Caki2 (cell line): ENCODE measurements at regions of chr1 and their contacts with region 1.

Region 1: DNA sequence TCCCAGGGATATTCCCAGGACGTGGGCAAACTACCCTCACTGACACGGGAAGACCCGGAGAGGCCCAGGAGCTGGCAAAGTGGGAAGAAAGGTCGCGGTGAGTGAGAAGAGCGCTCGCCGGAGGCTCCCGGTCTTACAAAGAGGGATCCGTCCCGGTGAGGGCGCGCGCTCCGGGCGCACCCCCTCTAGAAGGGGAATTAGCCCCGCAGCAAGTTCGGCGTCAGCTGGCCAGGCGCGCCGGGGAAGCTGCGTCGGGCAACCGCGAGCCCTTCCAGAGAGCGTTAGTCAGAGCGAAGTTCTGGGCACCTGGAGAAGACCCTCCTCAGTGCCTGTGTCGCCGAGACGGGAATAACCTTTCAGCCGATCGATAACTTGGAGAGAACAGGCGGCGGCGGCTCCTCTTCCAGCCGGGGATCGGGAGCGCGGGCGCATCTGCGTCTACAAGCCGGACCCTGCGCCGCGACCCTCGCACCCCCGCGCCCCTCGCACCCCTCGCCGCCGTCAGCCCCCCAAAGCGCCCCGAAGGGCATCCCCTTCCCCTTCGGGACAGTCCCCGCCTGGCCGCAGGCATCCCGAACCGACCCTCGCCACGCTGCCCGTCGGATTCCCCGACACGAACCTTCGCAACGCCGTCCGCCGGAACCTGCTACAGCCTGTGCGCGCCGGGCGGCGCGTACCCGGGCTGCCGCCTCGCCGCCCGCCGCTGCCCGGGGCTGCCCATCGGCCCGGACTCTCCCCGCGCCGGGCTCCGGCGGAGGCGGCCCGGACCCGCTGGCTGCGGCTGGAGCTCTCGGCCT is 485 bp downstream of the SIPA1L2 start:
- DNase-seq: peak; percentile 57

Region 2: DNA sequence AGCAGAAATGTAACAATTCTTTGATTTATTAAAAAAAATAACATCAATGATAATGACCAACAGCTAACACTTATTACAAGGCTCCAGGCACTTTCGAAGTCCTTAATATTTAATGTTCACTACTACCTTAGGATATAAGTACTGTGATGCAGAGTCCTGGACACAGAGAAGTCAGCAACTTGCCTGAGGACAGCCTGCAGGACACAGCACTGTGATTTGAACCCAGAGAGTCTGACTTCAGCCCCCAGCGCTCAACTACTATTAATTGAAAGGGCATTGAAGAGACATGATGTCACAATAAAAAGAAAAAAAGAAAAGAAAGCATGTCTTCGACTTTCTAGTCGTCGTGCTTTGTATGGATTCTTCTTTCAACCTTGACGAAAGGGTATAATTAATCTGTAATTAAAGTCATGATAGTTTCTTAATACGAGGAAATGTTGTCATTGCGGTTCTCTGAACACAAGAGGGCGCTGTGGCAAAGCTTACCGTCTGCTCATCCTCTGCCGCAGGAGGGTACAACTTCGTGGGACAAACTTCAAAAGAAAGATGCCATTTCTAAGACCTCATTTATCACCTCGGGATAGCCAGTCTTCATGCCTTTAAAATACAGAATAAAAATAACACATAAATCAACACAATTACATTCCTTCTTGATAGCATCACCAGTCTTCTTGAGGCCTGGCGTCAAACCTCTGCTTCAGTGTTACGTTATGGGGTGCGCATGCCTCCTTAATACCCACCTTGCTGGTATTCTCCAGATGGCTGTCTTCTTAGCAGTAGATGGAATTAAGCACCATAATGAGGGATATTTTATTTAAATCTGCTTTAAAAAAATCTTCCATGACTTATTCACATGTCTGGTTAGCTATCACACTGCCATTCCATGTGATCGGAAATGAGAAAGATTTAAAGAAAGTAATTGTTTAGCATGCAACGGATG is 762.8 kb before region 1 on chr1:
- in situ Hi-C with region 1: loop called (anchors 10 kb)
- DNase-seq: peak; percentile 44